ENCODE measurements at regions of chr6 and their contacts with region 1.

Region 1: DNA sequence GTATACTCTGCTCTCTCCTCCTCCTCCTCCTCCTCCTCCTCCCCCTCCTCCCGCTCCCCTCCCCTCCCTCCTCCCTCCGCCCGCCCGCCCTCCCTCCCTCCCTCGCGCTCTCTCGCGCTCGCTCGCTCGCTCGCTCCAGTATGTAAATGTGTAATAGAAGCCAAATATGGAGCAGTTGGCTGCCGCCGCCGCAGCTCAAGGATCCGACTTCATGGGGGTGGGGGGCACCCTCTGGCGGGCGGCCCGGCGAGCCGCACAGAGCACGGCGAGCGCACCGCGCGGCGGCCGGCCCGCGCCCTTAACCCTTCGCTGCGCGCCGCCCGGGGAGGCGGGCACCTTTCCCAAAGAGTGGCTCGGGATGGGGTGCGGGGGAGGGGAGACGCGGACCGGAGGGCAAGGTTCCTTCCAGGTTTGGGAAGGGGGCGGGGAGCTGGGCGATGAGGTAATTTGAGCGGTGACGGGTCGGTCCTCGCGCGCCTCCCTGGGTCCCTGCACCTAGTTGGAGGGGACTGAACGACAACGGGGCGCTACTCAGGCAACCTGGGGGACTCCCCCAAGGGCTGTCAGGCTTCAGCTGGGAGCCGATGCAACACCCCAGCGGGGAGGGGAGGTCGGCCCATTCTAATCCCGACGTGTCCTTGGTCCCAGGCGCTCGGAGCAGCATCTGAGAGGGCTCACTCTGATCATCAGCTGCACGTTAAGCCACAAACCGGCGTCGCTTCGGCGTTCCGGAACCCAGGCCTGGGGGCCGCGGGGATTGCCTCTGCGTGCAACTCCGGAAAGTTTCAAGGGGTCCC is 409 bp upstream of the ATXN1 start:
- DNase-seq: peak; percentile 84 to 97
- H3K4me3 ChIP-seq: peak overlapping the region; percentile 91
- CTCF ChIP-seq: no peak
- POLR2A ChIP-seq: no peak

Region 2: GRCh38 chr6:16514249-16514648 is 247.4 kb before region 1 on chr6:
- intact Hi-C with region 1: loop called (anchors 10 kb)
- DNase-seq: no peak
- H3K4me3 ChIP-seq: no peak overlapping the region
- CTCF ChIP-seq: no peak
- POLR2A ChIP-seq: no peak

Region 3: GRCh38 chr6:16740097-16740496 is 21.6 kb before region 1 on chr6:
- intact Hi-C with region 1: loop called (anchors 1 kb)
- DNase-seq: no peak
- H3K4me3 ChIP-seq: no peak overlapping the region
- CTCF ChIP-seq: no peak
- POLR2A ChIP-seq: no peak